ENCODE measurements at regions of chr1 and their contacts with region 1.

Region 1: DNA sequence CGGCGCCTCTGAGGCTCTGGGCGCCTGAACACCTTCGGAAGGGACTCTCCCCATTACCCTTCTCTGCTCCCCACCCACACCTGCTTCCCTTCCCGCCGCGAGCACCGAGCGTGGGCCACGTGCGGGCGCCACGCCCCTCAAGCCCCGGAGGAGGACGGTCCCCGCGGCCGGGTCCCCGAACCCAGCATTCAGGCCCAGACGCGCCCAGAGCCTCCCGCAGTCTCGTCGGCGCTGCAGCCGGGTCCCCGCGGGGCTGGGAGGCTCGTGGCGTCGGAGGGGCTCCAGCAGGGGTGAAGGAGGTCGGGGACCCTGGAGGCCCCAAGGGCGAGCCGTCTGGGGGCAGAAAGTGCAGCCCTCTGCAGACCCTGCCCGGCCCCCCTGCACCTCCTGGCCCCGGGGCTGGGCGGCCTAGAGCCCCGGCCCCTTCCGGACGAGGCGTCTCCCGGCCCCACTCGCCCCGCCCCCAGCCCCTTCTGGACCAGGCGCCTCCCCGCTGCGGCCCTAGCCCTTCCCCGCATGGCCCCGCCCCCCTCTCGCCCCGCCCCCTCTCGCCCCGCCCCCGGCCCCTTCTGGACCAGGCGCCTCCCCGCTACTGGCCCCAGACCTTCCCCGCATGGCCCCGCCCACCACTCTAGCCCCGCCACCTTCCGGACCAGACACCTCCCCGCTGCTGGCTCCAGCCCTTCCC is 378 bp upstream of the SMIM1 start:
- DNase-seq: peak; percentile 73 to 97 (median 88)
- ATAC-seq: peak; percentile 77
- H3K4me3 ChIP-seq: peak overlapping the region; percentile 55
- H3K4me3 Mint-ChIP-seq: peak overlapping the region; percentile 80
- H3K27ac ChIP-seq: no peak overlapping the region
- H3K27ac Mint-ChIP-seq: no peak overlapping the region
- H3K4me1 ChIP-seq: peaks cover 33% of the 10 kb centered on the region
- H3K4me1 Mint-ChIP-seq: peaks cover 5% of the 10 kb centered on the region
- H3K27me3 ChIP-seq: no peaks in the 10 kb centered on the region
- H3K27me3 Mint-ChIP-seq: peaks cover 5% of the 10 kb centered on the region
- CTCF ChIP-seq: no peak

Region 2: DNA sequence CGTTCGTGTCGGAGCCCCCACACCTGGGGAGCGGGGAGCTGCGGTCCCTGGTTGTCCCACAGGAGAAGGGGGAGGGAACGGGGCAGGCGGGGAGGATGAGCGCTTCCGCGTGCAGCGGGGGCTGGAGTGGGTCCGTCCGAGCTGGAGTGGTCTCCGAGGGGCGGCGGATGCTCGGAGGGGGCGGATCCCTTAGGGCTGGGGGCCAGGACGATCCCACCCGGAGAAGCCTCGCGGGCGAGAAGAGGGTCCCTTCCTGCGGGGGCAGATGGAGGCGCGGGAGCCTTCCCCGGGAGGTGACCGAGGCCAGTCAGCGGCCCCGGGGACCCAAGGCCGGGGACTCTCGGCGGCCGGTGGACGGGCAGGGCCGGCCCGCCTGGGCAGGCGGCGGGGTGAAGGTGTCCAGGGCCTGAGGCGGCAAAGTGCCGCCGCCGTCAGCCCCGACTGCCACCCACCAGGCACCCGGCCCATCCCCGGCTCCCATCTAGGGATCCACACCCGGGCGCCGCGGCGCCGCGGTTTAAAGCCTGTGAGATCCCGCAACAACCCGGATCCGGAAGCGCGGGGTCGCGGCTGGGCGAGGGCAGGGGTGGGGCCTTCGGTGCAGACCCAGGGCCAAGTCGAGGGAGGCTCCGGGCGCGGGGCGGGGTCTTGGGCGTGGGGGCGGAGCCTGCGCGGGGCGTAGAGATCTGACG is 25.2 kb before region 1 on chr1:
- CTCF ChIA-PET with region 1: no interaction called
- POLR2A ChIA-PET with region 1: no interaction called
- intact Hi-C with region 1: loop called in 1 of 2 experiments (anchors 2 kb)
- DNase-seq: peak; percentile 76 to 94 (median 88)
- ATAC-seq: peak; percentile 98
- H3K4me3 ChIP-seq: peak overlapping the region; percentile 57
- H3K4me3 Mint-ChIP-seq: peak overlapping the region; percentile 79
- H3K27ac ChIP-seq: peak overlapping the region; percentile 26 to 29
- H3K27ac Mint-ChIP-seq: peak overlapping the region; percentile 65
- H3K4me1 ChIP-seq: peaks cover 29% of the 10 kb centered on the region
- H3K4me1 Mint-ChIP-seq: peaks cover 34% of the 10 kb centered on the region
- H3K27me3 ChIP-seq: no peaks in the 10 kb centered on the region
- H3K27me3 Mint-ChIP-seq: no peaks in the 10 kb centered on the region
- CTCF ChIP-seq: no peak

Region 3: GRCh38 chr1:5667513-5668325 is 1895.5 kb after region 1 on chr1:
- CTCF ChIA-PET with region 1: no interaction called
- POLR2A ChIA-PET with region 1: no interaction called
- intact Hi-C with region 1: no loop called
- DNase-seq: peak in 8 of 14 experiments; percentile 4 to 52 (median 28)
- ATAC-seq: peak; percentile 69
- H3K4me3 ChIP-seq: no peak overlapping the region
- H3K4me3 Mint-ChIP-seq: peak overlapping the region; percentile 89
- H3K27ac ChIP-seq: no peak overlapping the region
- H3K27ac Mint-ChIP-seq: peak overlapping the region; percentile 86
- H3K4me1 ChIP-seq: peaks cover 31% of the 10 kb centered on the region
- H3K4me1 Mint-ChIP-seq: peaks cover 12% of the 10 kb centered on the region
- H3K27me3 ChIP-seq: no peaks in the 10 kb centered on the region
- H3K27me3 Mint-ChIP-seq: peaks cover 10% of the 10 kb centered on the region
- CTCF ChIP-seq: no peak